Spleen (tissue), 13 donors: ENCODE measurements at regions of chr1 and their contacts with region 1.

Region 1: GRCh38 chr1:90841473-90841872 is 124.4 kb upstream of the BARHL2 start:
- DNase-seq: no peak
- H3K4me3 ChIP-seq: no peak overlapping the region
- H3K27ac ChIP-seq: no peak overlapping the region
- H3K4me1 ChIP-seq: peaks cover 0 to 6% (median 1%) of the 10 kb centered on the region in 6 donors
- H3K27me3 ChIP-seq: peaks cover 1 to 80% (median 47%) of the 10 kb centered on the region in 7 donors
- CTCF ChIP-seq: no peak
- POLR2A ChIP-seq: no peak

Region 2: GRCh38 chr1:90721210-90722194 is 120.0 kb before region 1 on chr1:
- intact Hi-C with region 1: loop called (anchors 10 kb)
- DNase-seq: peak; percentile 84
- H3K4me3 ChIP-seq: no peak overlapping the region
- H3K27ac ChIP-seq: no peak overlapping the region
- H3K4me1 ChIP-seq: peaks cover 11 to 74% (median 58%) of the 10 kb centered on the region in 6 donors
- H3K27me3 ChIP-seq: peaks cover 20 to 100% (median 97%) of the 10 kb centered on the region in 7 donors
- CTCF ChIP-seq: peak in 10 of 11 experiments; percentile 17 to 84 (median 74)
- POLR2A ChIP-seq: no peak

Region 3: DNA sequence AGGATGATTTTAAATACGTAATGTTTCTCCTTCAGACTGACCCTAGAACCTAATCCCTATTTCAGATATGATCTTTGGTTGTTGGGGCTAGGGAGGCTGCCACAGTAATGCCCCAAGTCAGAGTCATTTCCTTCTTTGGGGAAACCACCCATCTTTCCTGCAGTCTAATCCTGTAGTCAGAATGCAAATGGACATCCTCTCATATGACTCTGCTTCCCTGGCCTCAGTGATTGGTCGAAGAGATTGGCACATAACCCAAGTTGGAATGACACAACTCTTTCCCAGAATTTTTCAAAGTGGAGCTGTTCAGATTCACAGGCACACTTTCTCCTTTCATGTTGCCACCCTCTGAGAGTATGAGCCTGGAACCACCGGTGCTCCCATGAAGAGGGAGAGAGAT is 239.2 kb after region 1 on chr1:
- intact Hi-C with region 1: no loop called
- DNase-seq: no peak
- H3K4me3 ChIP-seq: no peak overlapping the region
- H3K27ac ChIP-seq: no peak overlapping the region
- H3K4me1 ChIP-seq: no peaks in the 10 kb centered on the region
- H3K27me3 ChIP-seq: no peaks in the 10 kb centered on the region
- CTCF ChIP-seq: no peak
- POLR2A ChIP-seq: no peak